ENCODE measurements at regions of chr13 and their contacts with region 1.

Region 1: DNA sequence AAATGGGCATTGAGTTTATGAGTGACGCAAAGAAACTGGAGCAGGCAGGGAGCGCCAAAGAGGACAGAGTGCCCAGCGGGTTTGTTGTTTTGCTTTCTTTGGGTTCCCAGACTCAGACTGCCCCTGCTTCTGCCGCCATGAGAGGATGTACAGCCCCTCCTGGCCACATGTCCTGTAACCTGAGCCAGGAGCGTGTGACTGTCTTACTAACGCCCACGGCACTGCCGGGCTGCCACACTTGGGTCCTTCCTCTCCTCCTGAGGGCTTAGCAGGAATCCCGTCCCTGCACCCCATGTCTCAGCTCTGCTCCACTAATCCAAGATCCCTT is 80.5 kb downstream of the GPR12 start:
- DNase-seq: no peak
- ATAC-seq: no peak
- H3K4me3 ChIP-seq: no peak overlapping the region
- H3K4me1 ChIP-seq: no peaks in the 10 kb centered on the region
- CTCF ChIP-seq: no peak

Region 2: GRCh38 chr13:26482451-26483197 is 197.5 kb before region 1 on chr13:
- intact Hi-C with region 1: loop called in 1 of 2 experiments (anchors 10 kb)
- DNase-seq: peak in 1 of 3 donors; percentile 88
- ATAC-seq: peak; percentile 79
- H3K4me3 ChIP-seq: no peak overlapping the region
- H3K4me1 ChIP-seq: no peaks in the 10 kb centered on the region
- CTCF ChIP-seq: peak; percentile 87

Region 3: DNA sequence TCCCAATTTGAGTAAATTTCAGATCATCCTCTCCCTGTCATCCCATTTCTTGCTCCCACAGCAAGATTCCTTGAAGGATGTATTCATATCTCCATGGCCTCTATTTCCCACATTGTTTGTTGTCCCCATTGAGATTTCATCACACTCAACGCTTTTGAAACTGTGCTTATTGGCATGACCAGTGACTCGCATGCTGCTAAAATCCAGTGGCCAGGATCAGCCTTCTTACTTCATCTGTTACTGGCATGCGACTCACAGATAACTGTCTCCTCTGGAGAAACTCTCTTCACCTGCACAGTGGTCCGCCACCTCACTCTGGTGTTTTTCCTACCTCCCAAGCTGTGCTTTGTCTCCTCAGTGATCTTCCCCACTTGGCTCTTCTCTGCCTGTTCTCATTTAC is 26.8 kb before region 1 on chr13:
- intact Hi-C with region 1: no loop called
- DNase-seq: no peak
- ATAC-seq: no peak
- H3K4me3 ChIP-seq: no peak overlapping the region
- H3K4me1 ChIP-seq: no peaks in the 10 kb centered on the region
- CTCF ChIP-seq: no peak

Region 4: GRCh38 chr13:27065582-27065981 is 385.5 kb after region 1 on chr13:
- intact Hi-C with region 1: no loop called
- DNase-seq: no peak
- ATAC-seq: no peak
- H3K4me3 ChIP-seq: no peak overlapping the region
- H3K4me1 ChIP-seq: no peaks in the 10 kb centered on the region
- CTCF ChIP-seq: no peak

Measured in mucosa of descending colon (tissue), 3 donors.